Transverse colon (tissue), 4 donors: ENCODE measurements at regions of chr1 and their contacts with region 1.

Region 1: GRCh38 chr1:198157241-198157846 is 546 bp downstream of the NEK7 start:
- DNase-seq: peak; percentile 91
- H3K4me3 ChIP-seq: peak overlapping the region; percentile 82 to 100 (median 96)
- H3K27ac ChIP-seq: peak overlapping the region; percentile 99 to 100 (median 100)
- H3K4me1 ChIP-seq: peaks cover 14 to 41% (median 30%) of the 10 kb centered on the region in 4 donors
- H3K27me3 ChIP-seq: no peaks in the 10 kb centered on the region
- CTCF ChIP-seq: no peak
- EP300 ChIP-seq: no peak
- POLR2A ChIP-seq: peak; percentile 57

Region 2: GRCh38 chr1:197825541-197825940 is 331.8 kb before region 1 on chr1:
- in situ Hi-C with region 1: no loop called
- intact Hi-C with region 1: no loop called
- DNase-seq: no peak
- H3K4me3 ChIP-seq: no peak overlapping the region
- H3K27ac ChIP-seq: no peak overlapping the region
- H3K4me1 ChIP-seq: no peaks in the 10 kb centered on the region
- H3K27me3 ChIP-seq: no peaks in the 10 kb centered on the region
- CTCF ChIP-seq: no peak
- EP300 ChIP-seq: no peak
- POLR2A ChIP-seq: no peak

Region 3: GRCh38 chr1:198681831-198682759 is 524.8 kb after region 1 on chr1:
- in situ Hi-C with region 1: loop called in 1 of 4 experiments (anchors 25 kb)
- intact Hi-C with region 1: no loop called
- DNase-seq: peak; percentile 74
- H3K4me3 ChIP-seq: peak overlapping the region in 1 of 4 donors; percentile 22
- H3K27ac ChIP-seq: peak overlapping the region; percentile 56 to 73 (median 68)
- H3K4me1 ChIP-seq: peaks cover 0 to 19% (median 2%) of the 10 kb centered on the region in 4 donors
- H3K27me3 ChIP-seq: no peaks in the 10 kb centered on the region
- CTCF ChIP-seq: no peak
- EP300 ChIP-seq: no peak
- POLR2A ChIP-seq: peak; percentile 63